CD4-positive, alpha-beta T cell (primary cell): ENCODE measurements at regions of chr12 and their contacts with region 1.

Region 1: GRCh38 chr12:50517456-50518048 is 12.8 kb downstream of the DIP2B start:
- DNase-seq: peak in 3 of 14 experiments; percentile 48 to 58 (median 56)
- ATAC-seq: peak; percentile 78
- H3K4me3 ChIP-seq: no peak overlapping the region
- H3K4me3 Mint-ChIP-seq: no peak overlapping the region
- H3K27ac ChIP-seq: peak overlapping the region; percentile 44 to 48
- H3K27ac Mint-ChIP-seq: no peak overlapping the region
- H3K4me1 ChIP-seq: peaks cover 77% of the 10 kb centered on the region
- H3K4me1 Mint-ChIP-seq: peaks cover 42% of the 10 kb centered on the region
- H3K27me3 ChIP-seq: no peaks in the 10 kb centered on the region
- H3K27me3 Mint-ChIP-seq: no peaks in the 10 kb centered on the region
- CTCF ChIP-seq: no peak

Region 2: GRCh38 chr12:49777800-49778748 is 739.5 kb before region 1 on chr12:
- CTCF ChIA-PET with region 1: no interaction called
- POLR2A ChIA-PET with region 1: no interaction called
- intact Hi-C with region 1: no loop called
- DNase-seq: peak; percentile 61 to 86 (median 74)
- ATAC-seq: peak; percentile 96
- H3K4me3 ChIP-seq: no peak overlapping the region
- H3K4me3 Mint-ChIP-seq: no peak overlapping the region
- H3K27ac ChIP-seq: no peak overlapping the region
- H3K27ac Mint-ChIP-seq: no peak overlapping the region
- H3K4me1 ChIP-seq: peaks cover 13% of the 10 kb centered on the region
- H3K4me1 Mint-ChIP-seq: peaks cover 10% of the 10 kb centered on the region
- H3K27me3 ChIP-seq: peaks cover 3 to 6% of the 10 kb centered on the region in 2 experiments
- H3K27me3 Mint-ChIP-seq: peaks cover 31% of the 10 kb centered on the region
- CTCF ChIP-seq: peak; percentile 91

Region 3: DNA sequence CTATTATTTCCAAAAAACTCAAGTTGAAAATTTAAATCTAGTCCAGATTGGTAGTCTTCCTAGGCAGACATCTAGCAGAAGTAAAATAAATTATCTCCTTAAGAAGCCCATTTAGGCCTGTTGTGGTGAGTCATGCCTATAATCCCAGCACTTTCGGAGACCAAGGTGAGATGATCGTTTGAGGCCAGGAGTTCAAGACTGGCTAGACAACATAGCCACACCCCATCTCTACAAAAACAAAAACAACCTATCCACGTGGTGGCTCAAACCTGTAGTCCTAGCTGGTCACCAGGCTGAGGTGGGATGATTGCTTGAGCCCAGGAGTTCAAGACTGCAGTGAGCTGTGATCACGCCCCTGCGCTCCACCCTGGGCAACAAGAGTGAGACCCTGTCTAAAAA is 98.0 kb before region 1 on chr12:
- CTCF ChIA-PET with region 1: no interaction called
- POLR2A ChIA-PET with region 1: no interaction called
- intact Hi-C with region 1: no loop called
- DNase-seq: no peak
- ATAC-seq: no peak
- H3K4me3 ChIP-seq: no peak overlapping the region
- H3K4me3 Mint-ChIP-seq: no peak overlapping the region
- H3K27ac ChIP-seq: no peak overlapping the region
- H3K27ac Mint-ChIP-seq: peak overlapping the region; percentile 30
- H3K4me1 ChIP-seq: peaks cover 4% of the 10 kb centered on the region
- H3K4me1 Mint-ChIP-seq: peaks cover 18% of the 10 kb centered on the region
- H3K27me3 ChIP-seq: no peaks in the 10 kb centered on the region
- H3K27me3 Mint-ChIP-seq: no peaks in the 10 kb centered on the region
- CTCF ChIP-seq: no peak

Region 4: DNA sequence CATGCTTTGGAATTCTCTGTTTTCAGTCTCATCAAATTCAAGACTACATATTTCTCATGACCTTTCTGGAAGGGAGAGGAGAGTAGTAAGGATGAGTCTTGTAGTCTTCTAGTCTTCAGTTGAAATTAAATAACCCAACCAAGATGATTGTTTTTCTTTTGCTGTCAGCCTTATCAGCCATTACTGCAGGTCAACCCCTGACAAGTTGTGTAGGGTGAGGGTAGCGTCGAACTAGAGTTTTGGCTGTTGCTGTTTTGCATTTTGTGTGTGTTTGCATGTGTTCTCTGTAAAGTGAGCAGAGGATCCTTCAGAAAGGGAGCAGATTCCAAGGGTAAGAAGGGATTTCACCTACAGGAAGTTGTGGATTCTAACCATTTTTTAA is 15.6 kb after region 1 on chr12:
- CTCF ChIA-PET with region 1: no interaction called
- POLR2A ChIA-PET with region 1: interaction called, 8 read pairs
- intact Hi-C with region 1: loop called in 1 of 2 experiments (anchors 2 kb)
- DNase-seq: no peak
- ATAC-seq: peak; percentile 18
- H3K4me3 ChIP-seq: no peak overlapping the region
- H3K4me3 Mint-ChIP-seq: no peak overlapping the region
- H3K27ac ChIP-seq: peak overlapping the region; percentile 52 to 74
- H3K27ac Mint-ChIP-seq: no peak overlapping the region
- H3K4me1 ChIP-seq: peaks cover 44% of the 10 kb centered on the region
- H3K4me1 Mint-ChIP-seq: peaks cover 39% of the 10 kb centered on the region
- H3K27me3 ChIP-seq: no peaks in the 10 kb centered on the region
- H3K27me3 Mint-ChIP-seq: no peaks in the 10 kb centered on the region
- CTCF ChIP-seq: no peak

Region 5: DNA sequence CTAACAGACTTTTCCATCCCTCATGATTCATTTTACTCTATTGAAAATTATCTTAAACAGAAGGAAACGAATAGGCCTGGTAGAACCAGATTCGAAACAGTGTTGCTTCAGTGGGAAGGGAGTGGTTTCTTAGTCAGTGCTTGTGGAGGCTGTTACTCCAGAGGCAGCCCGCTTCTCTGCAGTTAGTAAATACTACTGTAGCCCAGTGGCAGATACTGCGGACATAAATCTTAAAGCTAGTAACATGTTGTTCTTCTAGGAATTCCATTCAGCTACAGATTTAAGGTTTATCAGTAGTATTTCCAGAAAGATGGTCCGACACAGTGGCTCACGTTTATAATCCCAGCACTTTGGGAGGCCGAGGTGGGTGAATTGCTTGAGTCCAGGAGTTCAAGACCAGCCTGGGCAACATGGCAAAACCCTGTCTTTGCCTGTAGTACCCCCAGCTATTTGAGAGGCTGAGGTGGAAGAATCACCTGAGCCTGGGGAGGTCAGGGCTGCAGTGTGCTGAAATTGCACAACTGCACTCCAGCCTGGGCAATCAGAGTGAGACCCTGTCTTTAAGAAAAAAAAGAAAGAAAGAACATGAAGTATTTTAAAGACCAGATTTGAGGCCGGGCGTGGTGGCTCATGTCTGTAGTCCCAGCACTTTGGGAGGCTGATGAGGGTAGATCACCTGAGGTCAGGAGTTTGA is 33.1 kb after region 1 on chr12:
- CTCF ChIA-PET with region 1: no interaction called
- POLR2A ChIA-PET with region 1: no interaction called
- intact Hi-C with region 1: loop called in 1 of 2 experiments (anchors 5 kb)
- DNase-seq: no peak
- ATAC-seq: no peak
- H3K4me3 ChIP-seq: no peak overlapping the region
- H3K4me3 Mint-ChIP-seq: no peak overlapping the region
- H3K27ac ChIP-seq: no peak overlapping the region
- H3K27ac Mint-ChIP-seq: no peak overlapping the region
- H3K4me1 ChIP-seq: peaks cover 13% of the 10 kb centered on the region
- H3K4me1 Mint-ChIP-seq: peaks cover 58% of the 10 kb centered on the region
- H3K27me3 ChIP-seq: no peaks in the 10 kb centered on the region
- H3K27me3 Mint-ChIP-seq: no peaks in the 10 kb centered on the region
- CTCF ChIP-seq: no peak

Region 6: GRCh38 chr12:50828886-50829285 is 311.3 kb after region 1 on chr12:
- CTCF ChIA-PET with region 1: no interaction called
- POLR2A ChIA-PET with region 1: no interaction called
- intact Hi-C with region 1: no loop called
- DNase-seq: no peak
- ATAC-seq: no peak
- H3K4me3 ChIP-seq: no peak overlapping the region
- H3K4me3 Mint-ChIP-seq: no peak overlapping the region
- H3K27ac ChIP-seq: no peak overlapping the region
- H3K27ac Mint-ChIP-seq: no peak overlapping the region
- H3K4me1 ChIP-seq: peaks cover 5% of the 10 kb centered on the region
- H3K4me1 Mint-ChIP-seq: peaks cover 6% of the 10 kb centered on the region
- H3K27me3 ChIP-seq: peaks cover 0 to 3% of the 10 kb centered on the region in 2 experiments
- H3K27me3 Mint-ChIP-seq: peaks cover 5% of the 10 kb centered on the region
- CTCF ChIP-seq: no peak